Dendritic cell treated with granulocyte-macrophage colony-stimulating factor and Interleukin-4, amounts not matched to agents 40 ng/mL and 50 ng/mL, for 4 days (primary cell): ENCODE measurements at regions of chr16 and their contacts with region 1.

Region 1: GRCh38 chr16:3400779-3401688 is at the starts of genes ZNF174 and ZSCAN32:
- H3K4me3 Mint-ChIP-seq: peak within 1 kb of the TSS; percentile 96
- H3K27ac Mint-ChIP-seq: peak within 1 kb of the TSS; percentile 85
- H3K4me1 Mint-ChIP-seq: peaks cover 27% of the 10 kb centered on the region
- H3K27me3 Mint-ChIP-seq: no peaks in the 10 kb centered on the region

Region 2: GRCh38 chr16:3465911-3466584 is 65.0 kb after region 1 on chr16:
- intact Hi-C with region 1: no loop called
- H3K4me3 Mint-ChIP-seq: no peak overlapping the region
- H3K27ac Mint-ChIP-seq: no peak overlapping the region
- H3K4me1 Mint-ChIP-seq: peaks cover 65% of the 10 kb centered on the region
- H3K27me3 Mint-ChIP-seq: no peaks in the 10 kb centered on the region

Region 3: GRCh38 chr16:3503523-3503922 is 102.5 kb after region 1 on chr16:
- intact Hi-C with region 1: loop called (anchors 2 kb)
- H3K4me3 Mint-ChIP-seq: no peak overlapping the region
- H3K27ac Mint-ChIP-seq: no peak overlapping the region
- H3K4me1 Mint-ChIP-seq: peaks cover 24% of the 10 kb centered on the region
- H3K27me3 Mint-ChIP-seq: peaks cover 6% of the 10 kb centered on the region